Activated B cell treated with CpG ODN at 0.5 μM for 24 hours (primary cell): ENCODE measurements at regions of chr15 and their contacts with region 1.

Region 1: DNA sequence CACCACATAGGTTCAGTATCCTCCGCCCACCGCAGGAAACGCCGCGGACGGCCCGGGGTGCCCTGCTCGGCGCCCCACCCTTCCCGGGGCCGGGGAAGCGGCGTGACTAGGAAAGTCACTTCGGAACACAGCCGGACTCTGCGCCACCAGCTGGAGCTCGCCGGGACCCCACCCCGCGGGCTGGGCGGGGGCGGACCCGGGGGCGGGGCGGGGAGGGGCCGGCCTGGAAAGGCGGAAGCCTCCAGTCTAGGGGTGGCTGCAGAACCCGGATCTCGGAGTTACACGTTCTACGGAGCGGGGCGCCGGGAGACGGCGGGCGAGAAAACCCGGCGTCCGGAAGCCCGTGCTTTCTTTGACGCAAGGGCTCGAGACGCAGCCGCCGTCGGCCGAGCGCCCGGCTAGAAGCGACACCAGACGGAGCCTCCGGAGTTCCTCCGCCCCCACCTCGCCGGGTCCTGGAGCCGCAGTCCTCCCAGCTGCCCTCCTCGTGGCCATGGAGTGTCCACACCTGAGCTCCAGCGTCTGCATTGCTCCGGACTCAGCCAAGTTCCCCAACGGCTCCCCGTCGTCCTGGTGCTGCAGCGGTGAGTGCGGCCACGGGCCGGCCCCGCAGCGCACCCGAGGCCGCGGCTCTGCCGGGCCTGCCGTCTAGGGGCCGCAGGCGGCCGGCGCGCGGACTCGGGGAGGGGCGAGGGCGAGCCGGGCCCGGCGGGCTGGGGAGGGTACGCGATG is at the start of gene USP3:
- DNase-seq: peak; percentile 93
- ATAC-seq: peak; percentile 68
- H3K4me3 Mint-ChIP-seq: peak within 1 kb of the TSS; percentile 93
- H3K27ac Mint-ChIP-seq: peak within 1 kb of the TSS; percentile 98
- H3K4me1 Mint-ChIP-seq: peaks cover 81% of the 10 kb centered on the region
- H3K27me3 Mint-ChIP-seq: no peaks in the 10 kb centered on the region
- CTCF ChIP-seq: no peak
- total RNA-seq, gene USP3: 92.7 and 110 TPM in 2 replicates

Region 2: GRCh38 chr15:63188926-63189871 is 315.2 kb before region 1 on chr15 and contains the start of gene RAB8B:
- CTCF ChIA-PET with region 1: no interaction called
- POLR2A ChIA-PET with region 1: interaction called, 6 read pairs
- intact Hi-C with region 1: loop called (anchors 1 kb)
- DNase-seq: peak; percentile 93
- ATAC-seq: peak; percentile 83
- H3K4me3 Mint-ChIP-seq: peak within 1 kb of the TSS; percentile 96
- H3K27ac Mint-ChIP-seq: peak within 1 kb of the TSS; percentile 95
- H3K4me1 Mint-ChIP-seq: peaks cover 57% of the 10 kb centered on the region
- H3K27me3 Mint-ChIP-seq: no peaks in the 10 kb centered on the region
- CTCF ChIP-seq: no peak
- total RNA-seq, gene RAB8B: 93.1 and 94.4 TPM in 2 replicates

Region 3: GRCh38 chr15:63481105-63481810 is 23.2 kb before region 1 on chr15:
- CTCF ChIA-PET with region 1: interaction called, 46 read pairs
- POLR2A ChIA-PET with region 1: interaction called, 509 read pairs
- intact Hi-C with region 1: loop called (anchors 1 kb)
- DNase-seq: no peak
- ATAC-seq: peak; percentile 59
- H3K4me3 Mint-ChIP-seq: peak overlapping the region; percentile 74
- H3K27ac Mint-ChIP-seq: peak overlapping the region; percentile 97
- H3K4me1 Mint-ChIP-seq: peaks cover 92% of the 10 kb centered on the region
- H3K27me3 Mint-ChIP-seq: no peaks in the 10 kb centered on the region
- CTCF ChIP-seq: no peak

Region 4: DNA sequence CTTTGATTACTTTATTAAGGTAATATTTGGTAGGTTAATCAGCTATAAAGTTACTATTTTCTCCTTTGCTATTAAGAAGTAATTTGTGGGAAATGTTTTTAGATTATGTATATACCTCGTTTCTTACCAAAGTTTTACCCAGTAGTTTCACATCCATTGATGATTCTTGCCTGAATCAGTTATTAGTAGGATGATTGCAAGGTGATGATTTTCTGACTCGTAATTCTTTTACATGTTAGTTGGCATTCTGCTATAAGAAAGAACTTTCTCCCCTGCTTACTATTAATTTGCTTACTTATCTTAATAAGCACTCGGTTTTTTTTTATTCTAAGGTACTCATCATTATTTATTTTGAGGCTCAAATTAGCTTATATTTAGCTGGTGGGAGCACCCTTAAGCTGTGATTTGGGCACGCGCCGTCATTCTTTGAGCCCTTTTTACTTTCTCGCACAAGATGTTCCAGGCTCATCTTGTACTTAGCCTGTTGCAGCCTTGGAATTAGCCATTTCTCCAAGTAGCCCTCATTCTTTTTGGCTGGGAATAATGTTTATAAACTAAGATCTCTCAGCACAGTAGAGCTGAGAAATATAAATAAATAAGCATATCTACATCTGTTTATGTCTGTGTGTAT is 15.2 kb after region 1 on chr15:
- CTCF ChIA-PET with region 1: no interaction called
- POLR2A ChIA-PET with region 1: interaction called, 20 read pairs
- intact Hi-C with region 1: loop called (anchors 1 kb)
- DNase-seq: no peak
- ATAC-seq: no peak
- H3K4me3 Mint-ChIP-seq: no peak overlapping the region
- H3K27ac Mint-ChIP-seq: no peak overlapping the region
- H3K4me1 Mint-ChIP-seq: peaks cover 94% of the 10 kb centered on the region
- H3K27me3 Mint-ChIP-seq: no peaks in the 10 kb centered on the region
- CTCF ChIP-seq: no peak

Region 5: DNA sequence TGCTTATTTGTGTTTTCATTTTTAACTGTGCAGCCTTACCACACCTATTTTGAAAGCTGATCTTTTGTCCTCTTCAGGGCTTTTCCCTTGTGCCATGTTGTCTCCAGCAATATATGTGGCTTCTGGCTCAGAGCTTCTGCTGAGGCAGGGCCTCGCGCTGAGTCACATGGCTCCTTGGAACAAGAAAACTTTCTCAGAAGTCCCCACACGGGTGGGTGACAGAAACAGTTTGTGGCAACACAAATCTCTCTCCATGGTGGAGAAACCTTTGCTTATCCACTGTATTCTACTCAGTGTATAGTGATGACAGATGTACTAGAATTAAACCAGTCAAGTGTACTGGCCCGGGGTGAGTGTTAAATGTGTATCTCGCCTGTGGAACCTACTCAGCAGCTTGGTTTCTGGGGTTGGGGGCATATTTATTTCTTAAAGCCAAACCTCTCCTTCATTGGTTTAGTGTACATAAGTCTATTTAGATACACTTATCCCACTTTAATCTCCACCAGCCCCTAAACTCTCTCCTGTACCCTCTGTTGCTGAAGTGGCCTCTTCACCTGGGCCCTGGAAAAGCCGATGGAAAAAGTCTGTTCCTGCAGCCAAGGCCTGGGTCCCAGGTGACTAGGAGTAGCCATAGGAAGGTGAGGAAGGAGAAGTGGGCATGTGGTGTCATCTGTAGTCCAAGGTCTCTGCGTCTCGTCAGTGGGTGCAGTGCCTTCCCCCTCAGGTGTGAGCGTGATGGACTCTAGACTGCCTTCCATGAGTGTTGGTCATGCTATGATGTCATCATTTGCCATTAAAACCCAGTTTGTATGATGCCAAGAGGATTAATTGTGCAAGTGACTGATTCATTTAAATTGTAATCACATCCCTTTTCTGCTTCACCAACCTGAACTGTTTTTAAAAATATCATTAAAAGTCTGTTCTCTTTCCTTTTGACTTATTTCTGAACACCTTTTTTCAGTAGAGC is 89.6 kb after region 1 on chr15:
- CTCF ChIA-PET with region 1: interaction called, 3 read pairs
- POLR2A ChIA-PET with region 1: interaction called, 96 read pairs
- intact Hi-C with region 1: no loop called
- DNase-seq: no peak
- ATAC-seq: peak; percentile 7
- H3K4me3 Mint-ChIP-seq: peak overlapping the region; percentile 9
- H3K27ac Mint-ChIP-seq: peak overlapping the region; percentile 86
- H3K4me1 Mint-ChIP-seq: peaks cover 71% of the 10 kb centered on the region
- H3K27me3 Mint-ChIP-seq: no peaks in the 10 kb centered on the region
- CTCF ChIP-seq: no peak